Ascending aorta (tissue), 2 donors: ENCODE measurements at regions of chr12 and their contacts with region 1.

Region 1: DNA sequence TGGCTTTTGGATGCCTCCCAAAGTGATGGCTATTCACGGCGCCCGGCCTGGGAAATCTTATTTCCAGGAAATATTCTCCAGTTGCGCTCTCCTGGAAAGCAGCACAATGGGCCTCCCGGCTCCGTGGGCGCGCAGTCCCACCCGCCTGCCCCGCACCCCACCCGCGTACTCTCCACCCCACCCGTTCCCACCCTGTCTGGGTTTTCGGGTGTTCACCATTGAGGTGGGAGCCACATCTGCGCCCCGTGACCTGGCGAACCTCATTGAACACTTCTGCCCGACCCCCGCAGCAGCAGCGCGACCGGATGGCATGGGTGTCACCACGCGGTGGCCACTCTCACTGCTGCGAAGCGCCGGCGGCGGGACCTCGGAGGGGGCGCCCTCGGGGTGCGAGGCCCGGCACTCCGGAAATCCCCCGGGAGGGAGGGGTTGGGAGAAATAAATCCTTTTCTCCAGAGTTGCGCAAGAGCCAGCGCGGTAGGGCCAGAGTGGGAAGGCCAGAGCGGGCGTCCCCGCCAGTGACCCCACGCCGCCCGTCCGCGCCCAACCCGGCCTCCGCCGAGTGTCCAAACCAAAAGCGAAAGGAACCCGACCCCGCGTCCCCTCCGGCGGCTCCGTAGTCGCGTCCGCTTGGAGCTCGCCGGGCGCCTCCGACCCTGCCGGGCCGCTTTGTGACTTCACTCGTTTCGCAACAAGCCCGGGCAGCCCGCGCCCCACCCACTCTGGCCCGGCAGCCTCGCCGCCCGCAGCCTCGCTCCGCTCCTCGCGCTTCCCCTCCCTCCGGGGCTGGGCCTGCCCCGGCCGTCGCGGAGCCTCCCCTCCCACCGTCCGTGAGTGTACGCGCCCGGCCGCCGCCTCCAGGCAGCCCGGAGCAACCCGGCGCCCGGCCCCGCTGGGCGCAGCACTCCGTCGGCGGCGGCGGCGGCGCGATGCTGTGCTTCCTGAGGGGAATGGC is at the start of gene DRAM1:
- DNase-seq: peak; percentile 43 to 94
- H3K4me3 ChIP-seq: peak within 1 kb of the TSS; percentile 65 to 80
- H3K27ac ChIP-seq: peak within 1 kb of the TSS; percentile 97 to 99
- H3K4me1 ChIP-seq: peaks cover 0 to 13% of the 10 kb centered on the region in 2 donors
- H3K27me3 ChIP-seq: no peaks in the 10 kb centered on the region
- CTCF ChIP-seq: peak in 1 of 3 experiments; percentile 8
- total RNA-seq, gene DRAM1: 8.8 TPM

Region 2: GRCh38 chr12:100266835-100267618 is 1610.1 kb before region 1 on chr12 and contains the starts of genes DEPDC4 and SCYL2:
- intact Hi-C with region 1: loop called (anchors 5 kb)
- DNase-seq: peak; percentile 92 to 98
- H3K4me3 ChIP-seq: peak within 1 kb of the TSS; percentile 95 to 100
- H3K27ac ChIP-seq: peak within 1 kb of the TSS; percentile 97 to 98
- H3K4me1 ChIP-seq: peaks cover 0 to 22% of the 10 kb centered on the region in 2 donors
- H3K27me3 ChIP-seq: no peaks in the 10 kb centered on the region
- CTCF ChIP-seq: no peak
- total RNA-seq, gene DEPDC4: not detected
- total RNA-seq, gene SCYL2: 11.6 TPM

Region 3: DNA sequence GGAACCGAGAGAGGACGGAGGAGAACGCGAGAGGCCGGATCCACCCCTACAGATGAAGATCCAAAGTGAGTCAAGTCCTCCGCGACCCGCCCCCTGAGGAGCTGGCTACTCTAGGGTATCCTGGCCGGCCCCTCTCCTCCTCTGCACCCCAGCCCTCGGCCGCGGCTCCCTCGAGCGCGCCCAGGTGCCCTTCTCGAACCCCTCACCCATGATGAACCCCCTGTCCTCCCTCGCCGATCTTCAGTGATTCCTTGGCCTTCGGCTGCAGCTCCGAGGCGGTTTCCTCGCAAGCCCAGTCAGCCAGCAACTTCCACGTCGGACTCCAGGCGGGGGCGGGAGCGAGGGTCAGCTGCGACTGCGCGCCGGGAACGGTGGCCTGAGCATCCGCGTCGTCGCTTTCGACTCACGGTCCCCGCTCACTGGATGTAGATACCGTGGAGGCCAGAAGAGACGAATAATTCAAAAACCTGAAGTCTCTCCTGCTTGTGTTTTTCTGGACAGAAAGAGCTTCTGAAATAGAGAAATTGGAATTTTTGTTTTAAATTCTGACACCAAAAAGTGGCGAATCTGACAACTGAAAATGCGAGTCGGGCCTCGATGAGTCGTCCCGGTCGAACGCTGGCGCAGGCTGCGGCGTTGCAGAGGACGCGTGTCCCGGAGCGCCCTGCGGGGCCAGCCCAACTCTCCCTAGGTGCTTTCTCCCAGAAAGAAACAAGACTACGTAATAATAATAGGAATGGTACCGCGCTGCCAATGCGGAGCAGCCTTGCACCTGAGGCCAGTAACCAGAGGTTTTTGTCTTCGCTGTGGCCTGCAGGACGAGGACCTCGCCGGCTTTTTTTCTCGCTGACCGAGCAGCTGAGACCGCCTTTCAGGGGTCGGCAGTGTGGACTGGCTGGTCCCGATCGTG is 469.4 kb before region 1 on chr12 and contains the start of gene ARL1:
- intact Hi-C with region 1: loop called (anchors 2 kb)
- DNase-seq: peak; percentile 29 to 89
- H3K4me3 ChIP-seq: peak within 1 kb of the TSS; percentile 89 to 92
- H3K27ac ChIP-seq: peak within 1 kb of the TSS; percentile 89 to 94
- H3K4me1 ChIP-seq: peaks cover 0 to 3% of the 10 kb centered on the region in 2 donors
- H3K27me3 ChIP-seq: no peaks in the 10 kb centered on the region
- CTCF ChIP-seq: no peak
- total RNA-seq, gene ARL1: 16.0 TPM

Region 4: DNA sequence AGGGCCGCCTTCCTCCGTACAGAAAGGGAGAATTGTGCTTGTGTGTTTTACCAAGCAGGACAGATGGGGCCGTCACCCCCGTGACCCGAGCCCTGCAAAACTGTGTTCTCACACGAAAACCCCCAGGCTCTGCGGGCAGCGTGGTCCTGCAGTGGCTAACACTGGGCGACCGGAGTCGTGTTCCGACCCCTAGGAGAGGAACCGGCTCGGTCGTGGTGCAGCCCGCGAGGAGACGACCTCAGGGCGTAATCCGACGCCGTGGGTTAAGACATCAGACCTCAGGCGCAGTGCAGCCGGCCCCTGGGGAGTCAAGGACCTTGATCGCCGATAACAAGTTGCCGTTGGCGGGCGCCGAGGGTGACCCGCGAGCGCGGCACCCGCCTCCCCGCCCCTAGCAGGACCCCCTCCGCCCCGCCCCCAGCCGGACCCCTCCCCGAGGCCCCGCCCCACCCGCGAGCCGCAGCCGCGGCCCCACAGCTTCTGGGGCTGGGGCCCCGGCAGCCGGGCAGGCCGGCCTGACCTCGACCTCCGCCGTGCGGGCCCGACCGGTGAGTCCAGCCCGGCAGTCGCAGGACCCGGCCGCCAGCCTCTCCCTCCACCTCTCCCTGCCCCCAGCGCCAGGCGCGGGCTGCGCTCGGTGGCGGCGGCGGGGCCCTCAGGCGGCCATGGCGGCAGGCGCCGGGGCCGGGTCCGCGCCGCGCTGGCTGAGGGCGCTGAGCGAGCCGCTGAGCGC is 179.8 kb before region 1 on chr12 and contains the start of gene CHPT1:
- intact Hi-C with region 1: loop called (anchors 5 kb)
- DNase-seq: peak in 1 of 2 donors; percentile 86
- H3K4me3 ChIP-seq: peak within 1 kb of the TSS; percentile 92 to 99
- H3K27ac ChIP-seq: peak within 1 kb of the TSS; percentile 77 to 98
- H3K4me1 ChIP-seq: peaks cover 6 to 18% of the 10 kb centered on the region in 2 donors
- H3K27me3 ChIP-seq: no peaks in the 10 kb centered on the region
- CTCF ChIP-seq: no peak
- total RNA-seq, gene CHPT1: 56.6 TPM

Region 5: DNA sequence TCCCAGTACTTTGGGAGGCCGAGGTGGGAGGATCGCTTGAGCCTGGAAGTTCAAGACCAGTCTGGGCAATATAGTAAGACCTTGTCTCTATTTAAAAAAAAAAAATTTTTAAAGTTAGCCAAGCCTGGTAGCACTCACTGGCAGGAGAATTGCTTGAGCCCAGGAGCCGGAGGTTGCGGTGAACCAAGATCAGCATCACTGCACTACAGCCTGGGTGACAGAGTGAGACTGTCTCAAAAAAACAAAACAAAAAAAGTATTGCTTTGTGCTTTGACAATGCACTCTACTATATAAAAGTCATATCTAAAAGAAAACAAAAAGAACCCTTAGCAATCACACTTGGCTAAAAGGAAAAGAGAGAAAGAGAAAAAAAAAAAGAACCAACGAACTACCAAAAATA is 73.2 kb before region 1 on chr12:
- intact Hi-C with region 1: no loop called
- DNase-seq: no peak
- H3K4me3 ChIP-seq: no peak overlapping the region
- H3K27ac ChIP-seq: no peak overlapping the region
- H3K4me1 ChIP-seq: no peaks in the 10 kb centered on the region
- H3K27me3 ChIP-seq: no peaks in the 10 kb centered on the region
- CTCF ChIP-seq: no peak

Region 6: GRCh38 chr12:101830367-101831325 is 46.5 kb before region 1 on chr12 and contains the start of gene GNPTAB:
- intact Hi-C with region 1: loop called (anchors 1 kb)
- DNase-seq: peak; percentile 51 to 96
- H3K4me3 ChIP-seq: peak within 1 kb of the TSS; percentile 86 to 95
- H3K27ac ChIP-seq: peak within 1 kb of the TSS; percentile 72 to 75
- H3K4me1 ChIP-seq: peaks cover 0 to 10% of the 10 kb centered on the region in 2 donors
- H3K27me3 ChIP-seq: no peaks in the 10 kb centered on the region
- CTCF ChIP-seq: peak; percentile 72 to 85 (median 73)
- total RNA-seq, gene GNPTAB: 9.5 TPM

Region 7: DNA sequence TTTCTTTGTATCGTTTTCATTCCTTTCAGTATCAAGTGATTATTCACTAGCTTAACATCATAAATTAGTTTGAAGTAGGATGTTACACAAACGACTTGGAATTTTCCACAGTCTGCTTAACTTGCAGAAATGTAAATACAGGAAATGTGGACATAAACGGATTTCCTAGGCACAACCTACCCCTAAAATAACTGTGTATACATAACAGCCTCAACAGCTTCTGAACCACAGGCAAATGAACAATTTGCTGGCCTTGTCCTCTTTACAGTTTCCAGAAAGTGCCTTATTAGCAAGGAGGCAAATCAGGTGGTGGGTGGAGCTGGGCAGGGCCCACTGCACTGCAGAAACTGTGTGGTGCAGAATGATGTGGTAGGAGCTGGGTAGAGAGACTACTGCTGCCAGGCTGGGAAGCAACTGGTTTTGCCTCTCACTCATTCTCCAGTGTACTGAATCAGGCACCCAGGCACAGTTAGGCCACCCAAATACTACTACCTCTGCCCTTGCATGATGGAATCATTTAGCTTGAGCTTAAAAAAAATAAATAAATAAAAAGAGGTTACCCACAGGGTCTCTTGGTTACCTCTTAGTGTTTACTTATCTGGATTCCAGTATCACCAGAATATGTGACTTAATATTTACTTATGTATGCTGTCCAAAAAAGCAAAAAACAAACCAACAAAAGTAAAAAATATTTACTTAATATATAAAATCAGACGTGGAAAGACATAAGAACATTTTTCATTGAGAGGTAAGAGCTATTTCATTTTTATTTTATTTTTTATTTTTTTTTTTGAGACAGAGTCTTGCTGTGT is 14.5 kb after region 1 on chr12:
- intact Hi-C with region 1: loop called (anchors 2 kb)
- DNase-seq: peak; percentile 20 to 70
- H3K4me3 ChIP-seq: no peak overlapping the region
- H3K27ac ChIP-seq: peak overlapping the region; percentile 44 to 69
- H3K4me1 ChIP-seq: peaks cover 0 to 6% of the 10 kb centered on the region in 2 donors
- H3K27me3 ChIP-seq: no peaks in the 10 kb centered on the region
- CTCF ChIP-seq: no peak

Region 8: DNA sequence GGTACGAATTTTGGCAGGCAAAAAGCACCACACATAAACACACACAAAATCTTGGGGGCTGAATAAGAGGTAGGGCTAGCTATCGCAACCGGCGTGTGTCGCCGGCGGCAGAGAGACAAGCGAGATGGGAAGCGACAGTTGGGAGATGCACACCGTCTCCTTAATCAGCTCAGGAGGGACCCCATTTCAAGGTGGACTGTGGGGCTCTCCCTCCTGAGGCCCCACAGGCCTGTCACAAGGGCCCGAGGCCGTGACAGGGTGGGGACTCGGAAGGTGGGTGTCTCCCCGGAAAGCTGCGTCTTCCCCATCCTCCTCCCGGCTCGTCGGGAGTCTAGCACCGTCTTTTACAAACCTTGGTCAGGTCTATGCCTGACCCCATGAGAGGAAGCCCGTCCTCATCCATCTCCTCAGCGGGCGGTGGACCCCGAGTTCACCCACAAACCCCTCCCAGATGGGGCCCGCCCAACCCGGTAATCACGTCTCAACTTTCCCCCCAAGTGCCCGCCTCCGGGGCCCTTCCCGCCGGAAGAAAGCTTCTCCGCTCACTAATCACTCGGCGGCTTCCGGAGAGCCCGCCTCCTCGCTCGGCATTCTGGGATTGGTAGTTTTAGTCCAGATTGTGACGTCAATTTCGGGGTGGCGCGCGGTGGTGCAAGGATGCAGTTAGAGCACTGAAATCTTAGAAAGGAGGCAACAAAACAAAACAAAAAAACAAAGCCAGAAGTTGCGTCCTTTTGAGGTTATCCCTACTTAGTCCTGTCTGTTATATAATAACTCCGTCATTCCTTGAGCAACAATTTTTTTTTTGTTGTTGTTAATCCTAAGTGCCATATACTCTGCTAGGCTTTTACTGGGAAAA is 184.7 kb after region 1 on chr12 and contains the start of gene WASHC3:
- intact Hi-C with region 1: loop called (anchors 1 kb)
- DNase-seq: peak; percentile 87 to 98
- H3K4me3 ChIP-seq: peak within 1 kb of the TSS; percentile 74 to 95
- H3K27ac ChIP-seq: peak within 1 kb of the TSS; percentile 89 to 92
- H3K4me1 ChIP-seq: no peaks in the 10 kb centered on the region
- H3K27me3 ChIP-seq: no peaks in the 10 kb centered on the region
- CTCF ChIP-seq: no peak
- total RNA-seq, gene WASHC3: 36.4 TPM